Dorsolateral prefrontal cortex (tissue), 120 donors: ENCODE measurements at regions of chr21 and their contacts with region 1.

Region 1: GRCh38 chr21:41933313-41934086 is 20.3 kb downstream of the C2CD2 start:
- DNase-seq: peak in 3 of 10 donors; percentile 5 to 38 (median 27)
- H3K4me3 ChIP-seq: peak overlapping the region in 5 of 59 donors; percentile 2 to 13 (median 6)
- H3K27ac ChIP-seq: peak overlapping the region in 25 of 59 donors; percentile 11 to 64 (median 35)
- H3K27me3 ChIP-seq: no peaks in the 10 kb centered on the region
- CTCF ChIP-seq: peak in 9 of 56 donors; percentile 8 to 18 (median 14)

Region 2: DNA sequence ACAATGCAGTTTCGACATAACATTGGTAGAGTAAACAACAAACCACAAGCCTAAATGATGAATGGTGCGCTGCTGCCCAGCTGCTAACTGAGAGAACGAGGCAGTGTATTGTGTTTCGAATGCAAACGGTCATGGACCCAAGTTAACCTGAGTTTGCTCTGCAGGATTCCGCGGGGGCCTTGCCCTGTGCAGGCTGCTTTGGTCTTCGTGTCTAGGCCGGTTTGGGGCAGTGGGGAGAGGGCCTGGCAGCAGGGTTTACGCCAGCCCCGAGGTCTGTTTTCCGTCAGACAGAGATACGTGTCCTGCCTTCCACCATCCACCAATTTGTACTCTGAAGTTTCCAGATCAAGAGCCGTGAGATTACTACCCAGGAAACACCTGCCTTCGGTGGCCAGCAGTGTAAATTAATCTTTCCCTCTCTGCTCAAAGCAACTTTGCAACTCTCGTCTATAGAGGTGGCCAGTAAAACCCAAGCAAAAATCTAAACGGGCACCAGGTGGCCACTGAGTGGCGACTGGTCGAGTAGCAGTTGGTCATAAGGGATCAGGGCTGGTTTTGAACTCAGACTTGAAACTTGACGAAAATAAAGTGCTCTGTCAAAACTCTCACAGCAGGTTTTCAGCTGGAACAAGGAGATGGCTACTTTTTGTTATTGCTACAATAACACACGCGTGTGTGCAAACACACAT is 48.0 kb before region 1 on chr21:
- intact Hi-C with region 1: loop called in 1 of 2 experiments (anchors 5 kb)
- DNase-seq: no peak
- H3K4me3 ChIP-seq: no peak overlapping the region
- H3K27ac ChIP-seq: no peak overlapping the region
- H3K27me3 ChIP-seq: no peaks in the 10 kb centered on the region
- CTCF ChIP-seq: no peak

Region 3: GRCh38 chr21:42467140-42467983 is 533.9 kb after region 1 on chr21:
- intact Hi-C with region 1: no loop called
- DNase-seq: peak in 2 of 10 donors; percentile 15 to 23
- H3K4me3 ChIP-seq: no peak overlapping the region
- H3K27ac ChIP-seq: no peak overlapping the region
- H3K27me3 ChIP-seq: no peaks in the 10 kb centered on the region
- CTCF ChIP-seq: peak in 30 of 56 donors; percentile 4 to 39 (median 24)